Mammary epithelial cell (primary cell): ENCODE measurements at regions of chr17 and their contacts with region 1.

Region 1: DNA sequence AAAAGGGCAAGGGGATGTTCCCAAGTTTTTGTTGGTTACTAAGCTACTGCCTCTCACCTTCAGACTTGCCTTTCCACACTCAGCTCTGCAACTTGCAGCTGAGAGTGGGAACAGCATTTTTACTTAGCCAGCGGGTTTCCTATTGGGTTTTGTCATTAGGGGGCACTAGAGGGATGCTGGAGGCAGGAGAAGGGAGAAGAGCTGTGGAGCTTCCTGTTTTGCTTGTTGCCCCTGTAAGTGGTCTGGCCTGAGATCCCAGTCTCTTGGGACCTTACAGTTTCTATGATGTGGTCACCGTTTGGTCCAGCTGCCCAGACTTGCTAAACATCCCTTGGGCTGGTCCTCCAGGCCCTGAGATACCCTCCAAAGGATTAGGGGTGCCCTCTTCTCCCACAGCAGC is 209.6 kb upstream of the NLRP1 start:
- DNase-seq: peak; percentile 33
- H3K4me3 ChIP-seq: no peak overlapping the region
- H3K27ac ChIP-seq: no peak overlapping the region
- H3K4me1 ChIP-seq: no peaks in the 10 kb centered on the region
- H3K27me3 ChIP-seq: peaks cover 7% of the 10 kb centered on the region
- CTCF ChIP-seq: peak; percentile 34 to 65

Region 2: DNA sequence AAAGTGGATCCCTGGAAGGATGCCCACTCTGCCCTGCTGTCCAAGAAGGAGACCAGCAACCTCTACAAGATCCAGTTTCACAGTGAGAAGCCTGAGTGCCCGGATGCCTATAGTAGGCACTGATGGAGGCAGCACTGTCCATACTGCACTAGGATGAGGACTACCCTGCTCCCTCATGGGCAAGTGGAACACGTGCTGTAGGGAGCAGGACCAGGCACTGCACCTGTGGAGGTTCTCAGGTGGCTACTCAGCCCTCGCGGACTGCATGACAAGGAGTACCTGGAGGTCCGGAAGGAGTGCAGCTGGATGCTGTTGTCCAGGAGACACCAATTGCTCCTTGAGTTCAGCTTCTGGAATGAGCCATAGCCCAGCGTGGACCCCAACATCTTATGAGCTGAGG is 63.5 kb before region 1 on chr17:
- CTCF ChIA-PET with region 1: no interaction called
- dilution Hi-C with region 1: loop called (anchors 5 kb)
- in situ Hi-C with region 1: no loop called
- intact Hi-C with region 1: no loop called
- DNase-seq: no peak
- H3K4me3 ChIP-seq: no peak overlapping the region
- H3K27ac ChIP-seq: no peak overlapping the region
- H3K4me1 ChIP-seq: no peaks in the 10 kb centered on the region
- H3K27me3 ChIP-seq: peaks cover 2% of the 10 kb centered on the region
- CTCF ChIP-seq: no peak

Region 3: DNA sequence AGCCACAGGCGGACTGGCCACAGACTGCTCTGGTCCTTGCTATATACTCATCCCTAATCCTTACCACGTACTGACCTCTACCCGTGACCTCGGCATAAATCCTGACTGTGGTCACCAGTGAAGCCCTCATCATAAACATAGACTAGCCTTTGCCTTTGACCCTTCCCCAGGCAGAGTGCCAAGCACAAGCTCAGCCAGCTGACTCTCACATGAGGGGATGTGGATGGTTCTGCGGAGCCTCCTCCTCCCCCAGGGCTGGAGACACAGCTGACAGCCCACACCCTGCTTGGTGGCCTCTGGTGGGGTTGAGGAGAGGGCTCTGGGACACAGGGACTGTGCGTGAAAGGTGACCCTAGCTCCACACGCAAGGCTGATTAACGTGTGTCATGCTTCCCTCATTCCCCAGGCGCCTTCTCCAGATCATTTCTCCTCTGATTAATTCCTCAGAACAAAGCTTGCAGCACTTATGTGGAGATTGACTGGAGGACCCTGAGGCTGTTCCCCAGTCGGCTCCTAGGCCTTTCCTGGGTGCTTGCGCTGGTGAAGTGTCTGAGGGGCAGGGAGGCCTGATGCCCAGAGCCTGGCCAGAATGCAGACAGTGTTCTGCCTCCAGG is 31.9 kb after region 1 on chr17:
- CTCF ChIA-PET with region 1: no interaction called
- dilution Hi-C with region 1: loop called (anchors 5 kb)
- in situ Hi-C with region 1: no loop called
- intact Hi-C with region 1: no loop called
- DNase-seq: no peak
- H3K4me3 ChIP-seq: no peak overlapping the region
- H3K27ac ChIP-seq: no peak overlapping the region
- H3K4me1 ChIP-seq: peaks cover 38% of the 10 kb centered on the region
- H3K27me3 ChIP-seq: no peaks in the 10 kb centered on the region
- CTCF ChIP-seq: no peak

Region 4: DNA sequence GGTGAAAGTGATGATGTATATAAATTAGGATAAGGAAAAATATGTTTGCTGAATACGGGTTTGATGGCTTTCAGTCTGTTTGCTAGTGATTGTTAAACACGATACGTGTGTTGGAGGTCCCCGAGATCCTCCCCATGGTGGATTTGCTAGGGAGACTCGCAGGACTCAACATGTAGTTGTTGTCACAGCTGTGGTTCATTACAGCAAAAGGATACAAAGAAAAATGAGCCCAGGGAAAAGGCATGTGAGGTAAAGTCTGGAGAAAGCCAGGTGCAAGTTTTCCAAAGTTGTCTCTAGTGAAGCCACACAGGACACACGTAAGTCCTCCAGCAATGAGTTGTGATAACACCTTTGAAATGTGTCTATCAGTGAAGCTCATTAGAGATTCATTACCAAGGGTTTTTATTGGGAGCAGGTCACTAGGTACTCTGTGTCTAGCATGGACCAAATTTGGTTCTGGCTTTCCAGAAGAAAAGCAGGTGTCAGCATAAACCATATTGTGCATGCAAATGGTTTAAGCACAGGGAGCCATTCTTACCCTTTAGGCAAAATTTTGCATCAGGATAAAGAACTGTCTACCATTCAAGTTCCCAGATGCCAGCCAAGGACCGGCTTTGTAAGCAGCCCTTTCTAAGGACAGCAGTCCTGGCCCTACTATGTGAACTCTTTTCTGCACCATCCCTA is 61.1 kb after region 1 on chr17:
- CTCF ChIA-PET with region 1: no interaction called
- dilution Hi-C with region 1: loop called (anchors 5 kb)
- in situ Hi-C with region 1: no loop called
- intact Hi-C with region 1: no loop called
- DNase-seq: no peak
- H3K4me3 ChIP-seq: no peak overlapping the region
- H3K27ac ChIP-seq: no peak overlapping the region
- H3K4me1 ChIP-seq: no peaks in the 10 kb centered on the region
- H3K27me3 ChIP-seq: no peaks in the 10 kb centered on the region
- CTCF ChIP-seq: no peak

Region 5: DNA sequence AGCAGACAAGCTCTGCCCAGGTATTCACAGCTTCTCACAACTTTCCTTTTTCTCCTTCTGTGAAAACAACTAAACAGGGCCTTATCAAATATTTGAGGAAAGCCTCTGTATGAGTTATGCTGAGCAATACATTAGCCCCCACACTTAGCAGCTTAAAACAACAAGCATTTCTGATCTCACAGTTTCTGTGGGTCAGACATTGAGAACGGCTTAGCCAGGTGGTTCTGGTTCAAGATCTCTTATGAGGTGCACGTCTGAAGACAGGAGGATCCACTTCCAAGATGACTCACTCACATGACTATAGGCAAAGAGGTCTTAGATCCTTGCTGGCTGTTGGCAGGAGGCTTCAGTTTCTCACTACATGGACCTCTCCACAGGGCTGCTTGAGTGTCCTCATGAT is 94.9 kb after region 1 on chr17:
- CTCF ChIA-PET with region 1: no interaction called
- dilution Hi-C with region 1: no loop called
- in situ Hi-C with region 1: no loop called
- intact Hi-C with region 1: loop called (anchors 10 kb)
- DNase-seq: peak; percentile 96
- H3K4me3 ChIP-seq: no peak overlapping the region
- H3K27ac ChIP-seq: no peak overlapping the region
- H3K4me1 ChIP-seq: no peaks in the 10 kb centered on the region
- H3K27me3 ChIP-seq: peaks cover 1% of the 10 kb centered on the region
- CTCF ChIP-seq: no peak

Region 6: GRCh38 chr17:5975661-5976060 is 181.8 kb after region 1 on chr17:
- CTCF ChIA-PET with region 1: no interaction called
- dilution Hi-C with region 1: no loop called
- in situ Hi-C with region 1: no loop called
- intact Hi-C with region 1: loop called (anchors 10 kb)
- DNase-seq: no peak
- H3K4me3 ChIP-seq: no peak overlapping the region
- H3K27ac ChIP-seq: no peak overlapping the region
- H3K4me1 ChIP-seq: no peaks in the 10 kb centered on the region
- H3K27me3 ChIP-seq: no peaks in the 10 kb centered on the region
- CTCF ChIP-seq: no peak

Region 7: GRCh38 chr17:6069539-6070429 is 275.9 kb after region 1 on chr17 and contains the start of gene WSCD1:
- CTCF ChIA-PET with region 1: no interaction called
- dilution Hi-C with region 1: no loop called
- in situ Hi-C with region 1: no loop called
- intact Hi-C with region 1: loop called (anchors 10 kb)
- DNase-seq: no peak
- H3K4me3 ChIP-seq: no peak within 1 kb of the TSS
- H3K27ac ChIP-seq: no peak within 1 kb of the TSS
- H3K4me1 ChIP-seq: no peaks in the 10 kb centered on the region
- H3K27me3 ChIP-seq: peaks cover 18% of the 10 kb centered on the region
- CTCF ChIP-seq: no peak
- total RNA-seq, gene WSCD1: not detected